Activated T-helper 1 cell treated with anti-CD3 and anti-CD28 coated beads, Interleukin-12 subunit alpha, Interleukin-12 subunit beta, Interleukin-2, Interleukin-4 antibody, amounts not matched to agents 30 ng/mL and 10 ng/mL and 1 ng/mL, durations not matched to agents 14 hours and 24 hours and 36 hours (primary cell): ENCODE measurements at regions of chr6 and their contacts with region 1.

Region 1: GRCh38 chr6:116531675-116532570 is 13.6 kb downstream of the TRAPPC3L start:
- DNase-seq: peak; percentile 56
- H3K4me3 Mint-ChIP-seq: no peak overlapping the region
- H3K27ac Mint-ChIP-seq: no peak overlapping the region
- H3K4me1 Mint-ChIP-seq: no peaks in the 10 kb centered on the region
- H3K27me3 Mint-ChIP-seq: peaks cover 46% of the 10 kb centered on the region

Region 2: GRCh38 chr6:115540077-115540869 is 991.6 kb before region 1 on chr6:
- intact Hi-C with region 1: no loop called
- DNase-seq: no peak
- H3K4me3 Mint-ChIP-seq: no peak overlapping the region
- H3K27ac Mint-ChIP-seq: no peak overlapping the region
- H3K4me1 Mint-ChIP-seq: no peaks in the 10 kb centered on the region
- H3K27me3 Mint-ChIP-seq: no peaks in the 10 kb centered on the region

Region 3: GRCh38 chr6:116287689-116288282 is 244.1 kb before region 1 on chr6:
- intact Hi-C with region 1: loop called (anchors 1 kb)
- DNase-seq: no peak
- H3K4me3 Mint-ChIP-seq: no peak overlapping the region
- H3K27ac Mint-ChIP-seq: no peak overlapping the region
- H3K4me1 Mint-ChIP-seq: no peaks in the 10 kb centered on the region
- H3K27me3 Mint-ChIP-seq: peaks cover 9% of the 10 kb centered on the region

Region 4: GRCh38 chr6:116351101-116351500 is 180.8 kb before region 1 on chr6:
- intact Hi-C with region 1: no loop called
- DNase-seq: no peak
- H3K4me3 Mint-ChIP-seq: no peak overlapping the region
- H3K27ac Mint-ChIP-seq: no peak overlapping the region
- H3K4me1 Mint-ChIP-seq: no peaks in the 10 kb centered on the region
- H3K27me3 Mint-ChIP-seq: no peaks in the 10 kb centered on the region

Region 5: GRCh38 chr6:116444092-116444491 is 87.8 kb before region 1 on chr6:
- intact Hi-C with region 1: loop called (anchors 1 kb)
- DNase-seq: no peak
- H3K4me3 Mint-ChIP-seq: no peak overlapping the region
- H3K27ac Mint-ChIP-seq: no peak overlapping the region
- H3K4me1 Mint-ChIP-seq: peaks cover 26% of the 10 kb centered on the region
- H3K27me3 Mint-ChIP-seq: peaks cover 24% of the 10 kb centered on the region

Region 6: DNA sequence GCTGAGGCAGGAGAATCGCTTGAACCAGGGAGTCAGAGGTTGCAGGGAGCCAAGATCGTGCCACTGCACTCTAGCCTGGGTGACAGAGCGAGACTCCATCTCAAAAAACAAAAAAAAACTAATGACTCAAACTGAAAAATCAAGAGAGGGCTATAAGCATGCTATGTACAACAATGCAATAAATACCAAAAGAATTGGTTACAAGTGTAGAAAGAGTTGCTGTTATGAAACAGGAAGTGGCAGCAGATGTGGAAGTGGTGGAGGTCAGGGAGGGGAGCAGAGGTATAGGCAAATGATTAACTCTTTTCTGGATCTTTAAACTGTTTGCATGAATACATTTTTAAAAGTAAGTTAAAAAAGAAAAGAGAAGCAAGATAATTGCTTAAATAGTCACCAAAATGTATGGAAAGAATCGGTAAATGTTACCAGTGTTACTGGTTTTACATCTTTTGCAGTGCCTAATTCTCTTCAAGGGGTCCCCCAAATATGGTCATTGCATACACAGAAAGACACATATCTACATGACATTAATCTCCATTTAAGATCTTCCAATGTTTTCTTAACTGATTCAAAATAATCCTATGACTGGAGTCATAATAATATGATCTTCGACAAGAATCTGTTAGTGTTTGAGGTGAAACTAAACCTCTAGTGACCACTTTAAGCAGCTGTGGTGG is 55.8 kb before region 1 on chr6:
- intact Hi-C with region 1: loop called (anchors 2 kb)
- DNase-seq: peak; percentile 54
- H3K4me3 Mint-ChIP-seq: peak overlapping the region; percentile 7
- H3K27ac Mint-ChIP-seq: peak overlapping the region; percentile 69
- H3K4me1 Mint-ChIP-seq: peaks cover 31% of the 10 kb centered on the region
- H3K27me3 Mint-ChIP-seq: peaks cover 11% of the 10 kb centered on the region

Region 7: GRCh38 chr6:116648156-116648555 is 116.2 kb after region 1 on chr6:
- intact Hi-C with region 1: loop called (anchors 1 kb)
- DNase-seq: no peak
- H3K4me3 Mint-ChIP-seq: no peak overlapping the region
- H3K27ac Mint-ChIP-seq: no peak overlapping the region
- H3K4me1 Mint-ChIP-seq: peaks cover 27% of the 10 kb centered on the region
- H3K27me3 Mint-ChIP-seq: no peaks in the 10 kb centered on the region